ENCODE measurements at regions of chr4 and their contacts with region 1.

Region 1: DNA sequence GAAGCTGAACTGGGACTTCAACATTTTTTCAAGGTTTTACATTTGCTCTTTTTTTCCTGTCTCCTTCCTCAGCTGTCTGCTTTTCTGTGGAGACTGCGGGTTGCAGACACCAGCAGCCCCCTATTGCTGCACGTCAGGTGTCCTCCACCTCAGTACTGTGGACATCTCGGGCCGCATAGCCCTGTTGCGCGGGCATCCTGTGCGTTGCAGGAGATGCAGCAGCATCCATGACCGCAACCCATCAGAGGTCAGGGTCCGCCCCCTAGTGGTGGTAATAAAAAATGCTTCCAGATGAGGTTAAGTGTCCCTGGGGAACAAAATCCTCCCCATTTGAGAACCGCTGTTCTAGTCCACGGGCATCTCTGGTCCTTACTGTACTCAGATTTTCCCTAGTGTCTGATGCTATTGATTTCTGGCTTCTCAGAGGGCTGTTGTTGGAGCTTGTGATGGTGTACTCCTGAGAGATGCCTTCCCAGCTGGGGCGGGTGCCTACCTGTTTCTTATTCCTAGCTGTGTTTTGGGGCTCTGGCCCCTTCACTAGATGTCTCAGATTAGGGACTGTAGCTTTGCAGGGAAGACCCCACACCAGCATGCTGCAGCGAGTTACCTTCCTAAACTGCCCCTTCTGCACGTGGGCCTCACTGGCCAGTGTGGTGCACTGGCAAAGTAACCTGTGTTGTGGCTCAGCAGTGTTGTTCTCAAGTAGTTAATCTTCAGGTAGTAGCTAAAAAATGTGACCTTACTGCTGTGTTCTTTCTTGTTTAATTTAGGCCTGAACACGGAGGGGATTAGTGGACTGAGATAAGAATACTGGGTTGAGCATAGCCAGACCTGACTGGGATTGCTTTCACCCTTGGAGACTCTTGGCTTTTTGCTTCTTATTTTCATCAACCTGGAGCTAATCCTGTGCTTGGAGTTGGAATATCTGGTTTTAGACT is 28.2 kb downstream of the NSD2 start:
- DNase-seq: peak; percentile 76
- H3K4me3 ChIP-seq: no peak overlapping the region
- H3K27ac ChIP-seq: peak overlapping the region in 1 of 4 donors; percentile 22
- H3K4me1 ChIP-seq: peaks cover 0 to 19% (median 4%) of the 10 kb centered on the region in 4 donors
- H3K27me3 ChIP-seq: no peaks in the 10 kb centered on the region
- CTCF ChIP-seq: peak; percentile 89 to 94 (median 92)
- EP300 ChIP-seq: no peak
- POLR2A ChIP-seq: no peak

Region 2: GRCh38 chr4:1746265-1746691 is 153.1 kb before region 1 on chr4:
- in situ Hi-C with region 1: loop called in 1 of 4 experiments (anchors 10 kb)
- intact Hi-C with region 1: loop called (anchors 5 kb)
- DNase-seq: peak; percentile 74
- H3K4me3 ChIP-seq: no peak overlapping the region
- H3K27ac ChIP-seq: no peak overlapping the region
- H3K4me1 ChIP-seq: peaks cover 0 to 5% (median 2%) of the 10 kb centered on the region in 4 donors
- H3K27me3 ChIP-seq: peaks cover 5% of the 10 kb centered on the region
- CTCF ChIP-seq: peak; percentile 65 to 88 (median 80)
- EP300 ChIP-seq: no peak
- POLR2A ChIP-seq: no peak

Region 3: GRCh38 chr4:1856042-1856788 is 43.2 kb before region 1 on chr4 and contains the start of gene LETM1:
- in situ Hi-C with region 1: no loop called
- intact Hi-C with region 1: loop called (anchors 10 kb)
- DNase-seq: peak; percentile 98
- H3K4me3 ChIP-seq: peak within 1 kb of the TSS; percentile 62 to 96 (median 90)
- H3K27ac ChIP-seq: peak within 1 kb of the TSS; percentile 89 to 93 (median 92)
- H3K4me1 ChIP-seq: peaks cover 21 to 57% (median 41%) of the 10 kb centered on the region in 4 donors
- H3K27me3 ChIP-seq: no peaks in the 10 kb centered on the region
- CTCF ChIP-seq: peak in 2 of 5 experiments; percentile 29 to 57
- EP300 ChIP-seq: no peak
- POLR2A ChIP-seq: peak; percentile 87
- total RNA-seq, gene LETM1: 173 to 469 (median 243) TPM

Region 4: GRCh38 chr4:2186133-2186864 is 286.9 kb after region 1 on chr4:
- in situ Hi-C with region 1: loop called in 1 of 4 experiments (anchors 25 kb)
- intact Hi-C with region 1: no loop called
- DNase-seq: peak; percentile 24
- H3K4me3 ChIP-seq: no peak overlapping the region
- H3K27ac ChIP-seq: no peak overlapping the region
- H3K4me1 ChIP-seq: no peaks in the 10 kb centered on the region
- H3K27me3 ChIP-seq: no peaks in the 10 kb centered on the region
- CTCF ChIP-seq: peak; percentile 24 to 58 (median 46)
- EP300 ChIP-seq: no peak
- POLR2A ChIP-seq: no peak

Measured in transverse colon (tissue), 4 donors.